ENCODE measurements at regions of chr18 and their contacts with region 1.

Region 1: DNA sequence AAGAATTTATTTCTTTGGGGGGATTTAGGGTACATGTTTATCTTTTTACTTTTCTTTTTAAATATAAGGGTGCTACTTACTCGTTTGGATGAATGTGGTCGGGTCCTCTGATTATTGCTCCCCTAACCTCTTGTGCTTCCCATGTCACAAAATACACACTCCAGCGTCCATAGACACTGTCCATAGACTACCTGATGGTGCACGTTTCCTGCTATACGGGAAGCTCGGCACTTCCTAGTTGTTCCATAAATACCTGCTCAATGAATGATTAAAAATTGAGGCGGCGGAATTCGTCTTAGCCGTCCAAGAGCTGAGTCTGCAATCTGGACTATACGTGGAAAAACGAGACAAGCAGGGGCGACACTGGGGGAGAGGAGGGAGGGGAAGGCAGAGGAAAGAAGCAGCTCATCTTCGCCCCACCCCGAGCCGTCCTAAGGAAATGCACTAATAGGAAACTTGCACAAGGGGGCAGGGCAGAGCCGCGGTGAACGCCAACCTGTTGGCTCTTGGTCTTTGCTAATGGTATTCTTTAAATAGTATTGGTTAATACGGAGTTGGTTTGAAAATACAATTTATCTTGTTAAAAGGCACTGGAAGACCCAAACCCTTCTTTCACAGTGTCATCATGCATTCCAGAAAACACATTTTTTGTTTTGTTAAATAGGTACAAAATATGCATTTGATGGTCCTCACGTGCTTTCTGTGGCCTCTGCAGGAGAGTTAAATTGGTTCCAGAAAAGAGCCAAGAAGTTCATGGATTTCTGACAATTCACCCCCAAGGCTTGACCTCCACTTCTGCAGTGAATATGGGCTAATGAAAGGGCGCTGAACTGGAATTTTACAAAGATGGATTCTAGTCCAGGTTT is 73.0 kb upstream of the KCTD1 start:
- DNase-seq: peak; percentile 64

Region 2: DNA sequence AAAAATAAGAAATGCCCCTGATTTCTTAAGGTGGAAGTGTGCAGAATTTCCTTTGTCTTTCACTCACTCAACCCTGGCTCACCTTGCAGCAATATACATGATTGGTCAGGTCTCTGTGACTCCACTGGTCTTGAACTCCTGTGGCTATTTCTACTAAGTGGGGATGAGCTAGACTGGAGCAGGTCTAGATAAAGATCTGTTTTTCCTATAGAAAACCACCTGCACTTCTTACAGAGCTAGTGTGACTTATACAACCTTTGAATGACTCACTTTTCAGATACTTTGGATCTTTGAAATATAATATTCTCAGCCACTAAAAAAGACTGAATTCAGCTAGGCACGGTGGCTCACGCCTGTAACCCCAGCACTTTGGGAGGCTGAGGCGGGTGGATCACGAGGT is 25.5 kb after region 1 on chr18:
- CTCF ChIA-PET with region 1: interaction called, 10 read pairs
- POLR2A ChIA-PET with region 1: no interaction called
- DNase-seq: no peak

Region 3: GRCh38 chr18:26804519-26804918 is 183.1 kb after region 1 on chr18:
- CTCF ChIA-PET with region 1: interaction called, 11 read pairs
- POLR2A ChIA-PET with region 1: no interaction called
- DNase-seq: peak; percentile 60